ENCODE measurements at regions of chr11 and their contacts with region 1.

Region 1: DNA sequence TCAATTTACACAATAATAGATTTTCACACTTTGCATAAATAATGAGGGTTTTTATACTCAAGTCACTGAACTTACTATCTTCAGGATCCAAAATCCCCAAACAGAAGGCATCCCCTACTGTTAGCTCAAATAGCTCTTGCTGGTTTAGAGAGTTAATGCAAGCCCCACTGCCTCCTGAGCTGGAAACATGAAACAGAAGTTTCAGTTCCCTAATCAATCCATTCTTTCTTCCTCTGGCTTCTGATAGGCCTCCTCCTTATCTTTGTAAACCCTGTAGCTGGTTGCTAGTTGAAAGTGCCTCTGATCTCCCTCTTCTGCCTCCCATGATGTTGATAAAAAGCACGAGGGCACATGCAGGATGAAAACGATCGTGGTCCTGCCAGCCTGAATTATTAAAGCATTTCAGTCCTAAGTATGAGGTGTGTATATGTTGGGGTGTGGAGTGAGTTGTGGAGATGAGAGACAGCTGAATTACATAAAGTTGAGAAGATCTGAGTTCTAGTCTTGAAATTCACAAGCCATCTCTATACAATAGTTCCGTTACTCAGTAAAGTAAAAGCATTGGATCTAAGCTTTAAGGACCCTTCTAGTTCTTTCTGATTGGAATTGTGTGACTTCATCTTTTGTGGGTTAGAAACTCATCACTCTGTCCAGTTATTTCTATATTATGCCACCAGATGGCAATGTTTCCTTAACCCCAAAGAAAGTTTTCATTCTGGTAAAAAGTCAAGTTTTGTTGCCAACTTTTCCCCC is 35.0 kb upstream of the EHF start:
- DNase-seq: peak in 2 of 4 donors; percentile 72 to 82
- ATAC-seq: peak; percentile 93
- H3K4me3 ChIP-seq: no peak overlapping the region
- H3K27ac ChIP-seq: peak overlapping the region in 1 of 2 donors; percentile 14
- H3K4me1 ChIP-seq: peaks cover 5 to 15% of the 10 kb centered on the region in 2 donors
- H3K27me3 ChIP-seq: no peaks in the 10 kb centered on the region
- CTCF ChIP-seq: peak; percentile 53 to 56

Region 2: GRCh38 chr11:34890812-34891211 is 304.9 kb after region 1 on chr11:
- intact Hi-C with region 1: loop called in 1 of 2 experiments (anchors 5 kb)
- DNase-seq: peak in 1 of 4 donors; percentile 49
- ATAC-seq: peak; percentile 85
- H3K4me3 ChIP-seq: no peak overlapping the region
- H3K27ac ChIP-seq: no peak overlapping the region
- H3K4me1 ChIP-seq: no peaks in the 10 kb centered on the region
- H3K27me3 ChIP-seq: no peaks in the 10 kb centered on the region
- CTCF ChIP-seq: peak; percentile 17 to 50

Region 3: DNA sequence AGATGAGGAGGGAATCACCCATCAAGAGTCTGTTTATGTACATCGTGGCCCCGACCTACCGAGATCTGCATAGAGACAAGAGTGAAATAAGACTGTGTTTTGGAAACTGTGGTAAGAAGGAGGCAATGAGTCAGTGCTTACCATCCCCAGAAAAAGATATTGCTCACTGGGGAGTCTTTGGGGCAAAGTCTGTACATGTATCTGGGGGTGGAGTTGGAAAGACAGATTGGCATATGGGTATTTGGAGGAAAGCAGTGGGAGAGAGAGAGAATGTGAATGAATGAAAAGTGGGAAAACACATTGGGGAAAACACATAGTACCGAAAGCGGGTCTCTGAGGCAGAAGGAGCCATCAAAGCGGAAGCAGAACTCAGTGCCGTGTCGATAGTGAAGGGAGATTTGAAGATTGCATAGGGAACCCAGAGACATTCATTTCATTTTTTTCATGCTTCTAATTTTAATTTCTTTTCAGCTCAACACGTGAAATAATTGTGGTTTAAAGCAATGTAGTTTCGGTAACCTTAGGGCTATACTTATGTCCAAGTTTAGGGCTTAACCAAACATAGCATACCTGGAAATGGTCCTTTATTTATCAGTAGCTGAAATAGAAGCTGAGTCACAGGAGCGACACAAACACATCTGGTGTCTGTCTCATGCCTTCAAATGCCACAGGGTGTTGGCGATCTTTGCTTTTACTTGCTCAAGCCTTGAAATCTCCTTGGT is 454.5 kb after region 1 on chr11:
- intact Hi-C with region 1: no loop called
- DNase-seq: no peak
- ATAC-seq: peak; percentile 10
- H3K4me3 ChIP-seq: no peak overlapping the region
- H3K27ac ChIP-seq: peak overlapping the region in 1 of 2 donors; percentile 59
- H3K4me1 ChIP-seq: peaks cover 9 to 64% of the 10 kb centered on the region in 2 donors
- H3K27me3 ChIP-seq: no peaks in the 10 kb centered on the region
- CTCF ChIP-seq: no peak

Measured in left lung (tissue), 14 donors.